ENCODE measurements at regions of chr1 and their contacts with region 1.

Region 1: DNA sequence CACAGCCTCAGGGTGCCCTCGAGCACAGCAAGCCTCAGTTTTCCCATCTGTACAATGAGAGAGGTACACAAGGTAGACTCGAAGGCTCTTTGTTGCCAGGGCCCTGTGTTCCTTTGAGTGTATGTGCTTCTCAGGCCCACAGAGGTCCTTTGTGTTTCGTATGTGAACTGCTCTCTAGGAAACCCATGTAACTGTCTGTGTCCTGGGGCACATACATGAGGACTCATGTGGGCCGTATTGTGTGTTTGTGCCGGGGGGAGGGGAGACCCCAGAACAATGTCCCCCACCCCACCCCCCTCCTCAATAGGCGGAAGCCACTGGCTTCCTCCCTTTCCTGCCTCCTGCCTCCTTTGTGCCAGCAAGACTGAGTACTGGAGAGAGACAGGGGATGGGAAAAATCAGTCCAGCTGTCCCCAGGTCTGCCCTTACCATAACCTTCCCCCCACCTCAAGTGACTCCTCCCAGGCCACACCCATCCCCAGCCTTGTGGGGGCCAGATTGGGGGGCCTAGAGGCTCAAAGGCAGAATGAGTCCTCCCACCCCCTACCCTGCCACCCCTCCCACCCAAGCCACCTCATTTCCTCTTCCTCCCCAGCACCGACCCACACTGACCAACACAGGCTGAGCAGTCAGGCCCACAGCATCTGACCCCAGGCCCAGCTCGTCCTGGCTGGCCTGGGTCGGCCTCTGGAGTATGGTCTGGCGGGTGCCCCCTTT is at the start of gene TIE1:
- DNase-seq: peak; percentile 94
- H3K4me3 ChIP-seq: peak within 1 kb of the TSS; percentile 47 to 96 (median 76)
- H3K27ac ChIP-seq: peak within 1 kb of the TSS; percentile 84
- H3K4me1 ChIP-seq: peaks cover 45% of the 10 kb centered on the region
- H3K27me3 ChIP-seq: no peaks in the 10 kb centered on the region
- CTCF ChIP-seq: no peak
- POLR2A ChIP-seq: peak; percentile 98
- total RNA-seq, gene TIE1: 562 and 620 TPM in 2 replicates

Region 2: GRCh38 chr1:43206600-43207228 is 93.8 kb before region 1 on chr1:
- CTCF ChIA-PET with region 1: interaction called, 3 read pairs
- POLR2A ChIA-PET with region 1: no interaction called
- dilution Hi-C with region 1: no loop called
- intact Hi-C with region 1: loop called (anchors 1 kb)
- DNase-seq: no peak
- H3K4me3 ChIP-seq: peak overlapping the region in 1 of 3 experiments; percentile 7
- H3K27ac ChIP-seq: peak overlapping the region; percentile 97
- H3K4me1 ChIP-seq: peaks cover 27% of the 10 kb centered on the region
- H3K27me3 ChIP-seq: no peaks in the 10 kb centered on the region
- CTCF ChIP-seq: no peak
- POLR2A ChIP-seq: peak; percentile 92

Region 3: DNA sequence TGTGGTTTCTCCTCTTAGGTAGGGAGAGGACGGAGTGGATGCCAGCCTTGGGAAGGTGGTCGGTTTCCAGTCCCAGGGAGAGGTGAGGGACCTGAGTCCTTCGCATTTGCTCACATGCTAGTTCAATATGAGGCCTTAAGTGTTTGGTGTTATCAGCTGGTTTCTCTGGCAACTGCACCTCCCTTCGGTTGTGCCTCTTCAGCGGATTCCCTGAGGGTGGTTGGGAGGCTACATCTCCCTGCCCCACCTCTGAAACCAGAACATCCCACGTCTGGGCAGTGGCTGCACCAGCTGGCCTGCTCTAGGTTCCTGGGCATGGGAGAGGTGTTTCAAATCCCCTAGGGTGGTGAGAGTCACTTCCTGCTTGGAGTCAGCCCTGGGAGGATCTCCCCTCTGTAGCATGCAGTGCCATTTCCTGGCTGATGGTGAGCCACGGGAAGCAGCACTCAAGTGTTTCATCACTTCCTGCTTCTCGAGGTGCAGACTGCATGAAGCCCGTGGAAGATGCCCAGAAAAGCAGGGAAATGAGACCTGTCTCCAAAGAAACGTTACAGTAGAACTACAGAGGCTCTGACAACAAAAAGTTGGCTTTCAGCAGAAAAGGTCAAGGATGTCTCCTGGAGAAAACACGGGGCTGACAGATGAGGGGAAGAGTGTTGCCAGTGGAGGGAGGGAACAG is 26.3 kb before region 1 on chr1:
- CTCF ChIA-PET with region 1: interaction called, 3 read pairs
- POLR2A ChIA-PET with region 1: no interaction called
- dilution Hi-C with region 1: no loop called
- intact Hi-C with region 1: loop called (anchors 1 kb)
- DNase-seq: peak; percentile 52
- H3K4me3 ChIP-seq: no peak overlapping the region
- H3K27ac ChIP-seq: peak overlapping the region; percentile 13
- H3K4me1 ChIP-seq: peaks cover 3% of the 10 kb centered on the region
- H3K27me3 ChIP-seq: no peaks in the 10 kb centered on the region
- CTCF ChIP-seq: no peak
- POLR2A ChIP-seq: no peak

Region 4: DNA sequence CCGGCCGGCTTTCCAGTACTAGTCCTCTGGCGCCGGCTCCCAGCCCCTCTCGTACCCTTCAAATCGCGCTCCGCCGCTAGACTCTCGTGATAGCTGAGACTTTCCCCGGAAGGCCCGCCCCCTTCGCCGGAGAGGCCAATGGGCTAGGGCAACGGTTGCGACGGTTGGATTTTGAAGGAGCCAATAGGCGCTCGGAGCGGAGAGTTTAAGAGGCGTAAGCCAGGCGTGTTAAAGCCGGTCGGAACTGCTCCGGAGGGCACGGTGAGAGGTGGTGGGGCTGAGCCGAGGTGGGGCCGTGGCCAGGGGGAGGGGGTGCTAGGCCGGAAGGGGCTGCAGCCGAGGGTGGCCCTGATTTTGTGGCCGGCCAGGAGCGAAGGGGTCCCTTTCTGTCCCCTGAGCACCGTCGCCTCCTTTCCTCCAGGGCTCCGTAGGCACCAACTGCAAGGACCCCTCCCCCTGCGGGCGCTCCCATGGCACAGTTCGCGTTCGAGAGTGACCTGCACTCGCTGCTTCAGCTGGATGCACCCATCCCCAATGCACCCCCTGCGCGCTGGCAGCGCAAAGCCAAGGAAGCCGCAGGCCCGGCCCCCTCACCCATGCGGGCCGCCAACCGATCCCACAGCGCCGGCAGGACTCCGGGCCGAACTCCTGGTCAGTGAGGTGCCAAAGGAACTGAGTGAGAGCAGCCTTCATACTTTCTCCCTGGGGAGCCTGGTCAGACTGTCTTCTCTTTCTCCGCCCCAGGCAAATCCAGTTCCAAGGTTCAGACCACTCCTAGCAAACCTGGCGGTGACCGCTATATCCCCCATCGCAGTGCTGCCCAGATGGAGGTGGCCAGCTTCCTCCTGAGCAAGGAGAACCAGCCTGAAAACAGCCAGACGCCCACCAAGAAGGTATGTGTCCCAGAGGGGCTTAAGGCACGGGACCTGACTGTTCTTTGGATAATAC is 58.5 kb after region 1 on chr1 and contains the start of gene CDC20:
- CTCF ChIA-PET with region 1: interaction called, 11 read pairs
- POLR2A ChIA-PET with region 1: no interaction called
- dilution Hi-C with region 1: no loop called
- intact Hi-C with region 1: loop called (anchors 2 kb)
- DNase-seq: peak; percentile 98
- H3K4me3 ChIP-seq: peak within 1 kb of the TSS; percentile 57 to 84 (median 80)
- H3K27ac ChIP-seq: peak within 1 kb of the TSS; percentile 80
- H3K4me1 ChIP-seq: peaks cover 38% of the 10 kb centered on the region
- H3K27me3 ChIP-seq: no peaks in the 10 kb centered on the region
- CTCF ChIP-seq: no peak
- POLR2A ChIP-seq: no peak
- total RNA-seq, gene CDC20: 156 and 170 TPM in 2 replicates

Region 5: DNA sequence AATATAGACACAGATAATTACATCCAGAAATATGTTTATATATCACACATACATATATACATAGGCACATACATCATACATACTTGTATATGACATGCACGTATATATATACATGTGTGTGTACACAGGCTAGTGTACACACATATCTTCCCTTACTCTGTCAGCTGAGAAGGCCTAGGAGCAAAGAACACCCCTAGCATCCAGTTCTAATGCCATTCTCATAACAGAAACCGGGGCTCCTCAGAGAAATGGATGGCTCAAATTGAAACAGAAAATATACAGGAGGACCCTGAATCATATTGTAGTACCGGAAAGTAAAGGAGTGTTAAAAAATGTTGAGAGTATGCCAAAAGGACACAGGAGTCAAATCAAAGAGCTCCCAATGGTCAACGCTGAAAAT is 172.9 kb after region 1 on chr1:
- CTCF ChIA-PET with region 1: no interaction called
- POLR2A ChIA-PET with region 1: no interaction called
- dilution Hi-C with region 1: no loop called
- intact Hi-C with region 1: loop called (anchors 5 kb)
- DNase-seq: peak; percentile 46
- H3K4me3 ChIP-seq: peak overlapping the region in 1 of 3 experiments; percentile 53
- H3K27ac ChIP-seq: peak overlapping the region; percentile 100
- H3K4me1 ChIP-seq: peaks cover 60% of the 10 kb centered on the region
- H3K27me3 ChIP-seq: no peaks in the 10 kb centered on the region
- CTCF ChIP-seq: no peak
- POLR2A ChIP-seq: no peak